PC-3 (cell line): ENCODE measurements at regions of chr1 and their contacts with region 1.

Region 1: GRCh38 chr1:66725885-66726665 is 26.2 kb upstream of the DYNLT5 start:
- DNase-seq: peak; percentile 78
- ATAC-seq: peak; percentile 49
- H3K4me3 ChIP-seq: no peak overlapping the region
- H3K27ac ChIP-seq: no peak overlapping the region
- H3K4me1 ChIP-seq: no peaks in the 10 kb centered on the region
- H3K27me3 ChIP-seq: peaks cover 47% of the 10 kb centered on the region
- CTCF ChIP-seq: peak; percentile 96

Region 2: GRCh38 chr1:66350001-66350547 is 376.0 kb before region 1 on chr1:
- CTCF ChIA-PET with region 1: no interaction called
- POLR2A ChIA-PET with region 1: no interaction called
- intact Hi-C with region 1: no loop called
- DNase-seq: peak; percentile 81
- ATAC-seq: peak; percentile 77
- H3K4me3 ChIP-seq: 0 out of 2 replicates have a peak overlapping the region, but pooled peaks have one; percentile 25
- H3K27ac ChIP-seq: peak overlapping the region; percentile 70
- H3K4me1 ChIP-seq: peaks cover 32% of the 10 kb centered on the region
- H3K27me3 ChIP-seq: no peaks in the 10 kb centered on the region
- CTCF ChIP-seq: no peak

Region 3: DNA sequence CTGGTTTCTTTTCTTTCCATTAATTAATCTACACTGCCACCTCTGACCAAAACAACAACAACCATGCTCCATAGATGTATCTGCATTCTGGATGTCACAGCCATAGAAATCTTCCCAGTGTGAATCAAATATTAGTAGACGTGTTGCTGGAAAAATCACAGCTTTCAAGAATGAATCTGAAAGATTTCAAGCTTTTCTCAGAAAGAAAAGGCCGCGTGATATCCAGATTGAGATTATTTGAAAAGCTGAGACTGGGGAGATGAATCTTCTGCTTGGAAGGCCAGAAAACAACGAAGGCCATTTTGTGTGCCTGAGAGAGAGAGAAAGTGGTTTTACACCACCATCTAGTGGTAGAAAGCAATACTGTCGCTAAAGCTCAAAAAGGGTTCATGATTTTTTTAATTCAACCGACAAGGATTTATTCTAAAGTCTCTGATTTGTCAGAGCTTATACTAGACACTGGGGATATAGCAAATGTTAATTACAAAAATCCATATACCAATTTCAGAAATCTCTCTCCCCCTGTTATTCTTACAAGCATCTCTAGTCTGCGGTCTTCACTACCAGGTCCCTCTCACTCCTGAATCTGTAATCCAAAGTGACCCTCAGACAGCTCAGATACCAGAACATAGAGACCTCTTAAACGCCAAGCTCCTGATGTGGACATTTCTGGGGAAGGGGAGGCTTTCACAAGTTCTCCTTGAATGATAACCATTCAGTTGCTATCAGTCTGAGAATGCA is 279.6 kb before region 1 on chr1:
- CTCF ChIA-PET with region 1: no interaction called
- POLR2A ChIA-PET with region 1: interaction called, 5 read pairs
- intact Hi-C with region 1: loop called (anchors 5 kb)
- DNase-seq: peak; percentile 86
- ATAC-seq: peak; percentile 60
- H3K4me3 ChIP-seq: no peak overlapping the region
- H3K27ac ChIP-seq: no peak overlapping the region
- H3K4me1 ChIP-seq: no peaks in the 10 kb centered on the region
- H3K27me3 ChIP-seq: no peaks in the 10 kb centered on the region
- CTCF ChIP-seq: peak; percentile 77

Region 4: GRCh38 chr1:66521721-66522365 is 204.2 kb before region 1 on chr1:
- CTCF ChIA-PET with region 1: no interaction called
- POLR2A ChIA-PET with region 1: no interaction called
- intact Hi-C with region 1: loop called (anchors 10 kb)
- DNase-seq: peak; percentile 77
- ATAC-seq: peak; percentile 69
- H3K4me3 ChIP-seq: no peak overlapping the region
- H3K27ac ChIP-seq: no peak overlapping the region
- H3K4me1 ChIP-seq: peaks cover 22% of the 10 kb centered on the region
- H3K27me3 ChIP-seq: no peaks in the 10 kb centered on the region
- CTCF ChIP-seq: no peak